ENCODE measurements at regions of chr5 and their contacts with region 1.

Region 1: GRCh38 chr5:167877114-167877722 is 414.2 kb upstream of the WWC1 start:
- DNase-seq: no peak
- CTCF ChIP-seq: no peak

Region 2: GRCh38 chr5:167888395-167888794 is 11.2 kb after region 1 on chr5:
- CTCF ChIA-PET with region 1: interaction called, 11 read pairs
- POLR2A ChIA-PET with region 1: no interaction called
- DNase-seq: no peak
- CTCF ChIP-seq: no peak

Measured in GM10248 (cell line).